ENCODE measurements at regions of chr13 and their contacts with region 1.

Region 1: GRCh38 chr13:80040196-80040980 is 300.5 kb downstream of the SPRY2 start:
- DNase-seq: peak; percentile 99
- H3K4me3 ChIP-seq: no peak overlapping the region
- H3K27ac ChIP-seq: peak overlapping the region; percentile 59
- H3K4me1 ChIP-seq: peaks cover 43% of the 10 kb centered on the region
- H3K27me3 ChIP-seq: no peaks in the 10 kb centered on the region
- CTCF ChIP-seq: no peak

Region 2: GRCh38 chr13:79936368-79937136 is 103.8 kb before region 1 on chr13:
- CTCF ChIA-PET with region 1: no interaction called
- dilution Hi-C with region 1: no loop called
- in situ Hi-C with region 1: no loop called
- intact Hi-C with region 1: loop called (anchors 2 kb)
- DNase-seq: peak; percentile 98
- H3K4me3 ChIP-seq: no peak overlapping the region
- H3K27ac ChIP-seq: peak overlapping the region; percentile 89
- H3K4me1 ChIP-seq: peaks cover 40% of the 10 kb centered on the region
- H3K27me3 ChIP-seq: no peaks in the 10 kb centered on the region
- CTCF ChIP-seq: no peak

Region 3: GRCh38 chr13:79988573-79988972 is 51.8 kb before region 1 on chr13:
- CTCF ChIA-PET with region 1: no interaction called
- dilution Hi-C with region 1: no loop called
- in situ Hi-C with region 1: no loop called
- intact Hi-C with region 1: loop called (anchors 2 kb)
- DNase-seq: peak; percentile 74
- H3K4me3 ChIP-seq: no peak overlapping the region
- H3K27ac ChIP-seq: peak overlapping the region; percentile 99
- H3K4me1 ChIP-seq: peaks cover 49% of the 10 kb centered on the region
- H3K27me3 ChIP-seq: no peaks in the 10 kb centered on the region
- CTCF ChIP-seq: no peak

Region 4: DNA sequence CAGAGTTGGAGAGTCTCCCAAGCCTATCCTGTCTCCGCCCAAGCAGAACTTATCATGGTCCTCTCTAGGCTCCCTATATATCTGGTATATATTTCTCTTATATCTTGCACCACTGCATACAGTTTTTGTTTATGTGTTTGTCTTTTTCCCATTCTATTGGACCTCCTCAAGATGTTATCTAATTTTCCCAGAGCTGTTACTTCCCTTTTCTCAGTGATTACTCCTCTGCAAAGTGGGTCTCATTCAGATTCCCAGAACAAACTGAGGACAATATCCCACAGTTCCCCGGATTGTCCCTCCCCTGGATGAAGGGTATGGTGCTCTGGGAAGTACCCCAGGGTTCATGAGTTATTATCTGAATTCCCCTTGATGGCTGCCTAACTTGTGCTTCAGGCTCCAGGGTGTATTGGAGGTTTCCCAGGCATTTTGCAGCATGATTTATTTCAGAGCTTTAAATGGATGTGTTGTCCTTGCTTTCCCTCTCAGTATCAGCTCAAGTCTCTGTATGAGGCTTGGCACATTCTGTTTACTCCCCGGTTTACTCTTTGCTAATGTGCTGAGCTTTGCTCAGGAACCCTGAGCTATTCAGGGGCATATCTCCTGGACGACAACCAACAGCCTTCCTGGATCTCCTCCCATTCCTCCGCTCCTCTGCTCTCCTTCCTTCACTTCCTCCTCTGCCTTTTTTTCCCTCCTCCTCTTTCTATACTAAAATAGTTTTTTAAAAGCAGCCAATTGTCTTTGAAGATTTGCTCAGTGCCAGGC is 28.8 kb before region 1 on chr13:
- CTCF ChIA-PET with region 1: no interaction called
- dilution Hi-C with region 1: no loop called
- in situ Hi-C with region 1: no loop called
- intact Hi-C with region 1: no loop called
- DNase-seq: no peak
- H3K4me3 ChIP-seq: no peak overlapping the region
- H3K27ac ChIP-seq: no peak overlapping the region
- H3K4me1 ChIP-seq: peaks cover 4% of the 10 kb centered on the region
- H3K27me3 ChIP-seq: no peaks in the 10 kb centered on the region
- CTCF ChIP-seq: no peak

Region 5: DNA sequence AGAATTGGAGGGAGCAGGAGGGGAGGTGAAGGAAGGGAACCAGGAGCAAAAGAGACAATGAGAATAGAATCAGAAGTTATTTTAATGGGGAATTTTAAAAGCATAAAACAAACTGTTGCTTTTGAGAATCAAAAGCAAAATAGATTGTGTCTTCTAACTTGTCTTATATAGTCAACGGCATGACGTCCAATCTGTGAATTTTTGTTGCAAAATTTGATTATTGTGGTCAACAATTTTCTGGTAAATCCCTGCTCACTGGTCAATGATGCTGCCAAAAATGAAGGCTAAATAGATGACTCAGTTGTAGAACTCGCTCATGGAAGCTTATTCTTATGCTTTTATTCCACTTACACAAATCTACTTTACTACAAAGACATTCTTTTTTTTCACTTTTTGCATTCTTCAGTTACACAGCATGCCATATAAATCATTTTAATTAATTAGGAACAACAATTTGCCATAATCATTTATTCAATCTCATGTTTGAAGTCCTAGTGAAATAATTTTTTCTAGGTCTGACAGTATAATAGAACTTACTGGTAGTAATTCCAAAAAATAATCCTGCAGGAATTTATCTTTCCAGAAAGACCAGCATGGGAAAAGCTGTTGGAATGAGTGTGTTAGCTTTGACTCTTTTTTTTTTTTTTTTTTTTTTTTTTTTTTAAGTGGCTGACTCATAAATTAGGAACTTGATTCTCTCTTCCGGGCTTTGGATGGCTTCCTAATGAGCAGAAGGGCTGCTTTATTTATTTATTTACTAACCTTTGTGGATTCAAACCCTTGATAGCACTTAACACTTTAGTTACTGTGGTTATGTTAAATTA is 43.7 kb after region 1 on chr13:
- CTCF ChIA-PET with region 1: no interaction called
- dilution Hi-C with region 1: no loop called
- in situ Hi-C with region 1: no loop called
- intact Hi-C with region 1: loop called (anchors 2 kb)
- DNase-seq: peak; percentile 61
- H3K4me3 ChIP-seq: no peak overlapping the region
- H3K27ac ChIP-seq: peak overlapping the region; percentile 63
- H3K4me1 ChIP-seq: peaks cover 48% of the 10 kb centered on the region
- H3K27me3 ChIP-seq: no peaks in the 10 kb centered on the region
- CTCF ChIP-seq: no peak

Region 6: DNA sequence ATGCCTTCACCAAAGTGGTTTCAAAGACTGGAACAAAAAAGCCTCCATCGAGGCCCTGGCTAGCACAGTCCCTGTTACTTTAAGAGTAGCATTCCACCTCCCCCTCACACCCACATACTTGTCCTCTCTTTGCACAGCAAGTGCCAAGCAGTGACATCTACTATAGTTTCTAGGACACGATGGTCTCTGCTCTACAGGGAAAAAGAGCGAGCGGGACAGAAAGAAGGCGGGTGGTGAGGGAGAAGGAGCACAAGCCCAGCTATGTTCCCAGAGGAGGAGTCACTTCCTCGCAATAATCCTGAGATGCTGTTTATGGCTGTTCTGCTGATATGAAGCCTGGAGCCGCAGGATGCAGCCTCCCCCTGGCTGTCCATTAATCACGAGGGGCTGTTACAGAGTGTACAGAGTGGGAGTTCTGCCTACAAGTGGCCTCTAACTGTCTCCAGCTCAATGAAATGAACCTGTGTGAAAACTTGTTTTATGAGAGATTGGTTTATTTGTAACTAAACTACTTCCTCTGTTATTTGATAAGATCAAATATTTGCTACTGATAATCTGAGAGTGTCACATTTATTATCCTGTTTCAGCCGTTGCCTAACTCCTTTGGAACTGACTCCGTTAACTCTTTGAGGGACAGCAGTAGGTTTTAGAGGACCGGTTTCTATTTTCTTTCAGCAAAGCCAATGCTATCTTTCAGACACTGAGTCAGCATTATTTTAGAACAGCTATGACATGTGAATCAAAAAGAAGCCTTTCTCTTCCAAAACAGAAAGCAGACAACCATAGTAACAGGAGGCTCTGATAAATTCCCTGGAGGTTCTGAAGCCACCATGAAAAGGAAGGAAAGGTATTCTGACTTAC is 92.6 kb after region 1 on chr13:
- CTCF ChIA-PET with region 1: no interaction called
- dilution Hi-C with region 1: no loop called
- in situ Hi-C with region 1: no loop called
- intact Hi-C with region 1: loop called (anchors 5 kb)
- DNase-seq: peak; percentile 15
- H3K4me3 ChIP-seq: peak overlapping the region in 1 of 3 experiments; percentile 13
- H3K27ac ChIP-seq: peak overlapping the region; percentile 24
- H3K4me1 ChIP-seq: peaks cover 11% of the 10 kb centered on the region
- H3K27me3 ChIP-seq: no peaks in the 10 kb centered on the region
- CTCF ChIP-seq: no peak